Naive thymus-derived CD8-positive, alpha-beta T cell (primary cell): ENCODE measurements at regions of chr14 and their contacts with region 1.

Region 1: GRCh38 chr14:38079268-38079667 is 128.4 kb upstream of the SSTR1 start:
- DNase-seq: no peak
- ATAC-seq: no peak
- H3K4me3 Mint-ChIP-seq: peak overlapping the region in 8 of 10 donors; percentile 31 to 84 (median 64)
- H3K27ac Mint-ChIP-seq: peak overlapping the region; percentile 90 to 97 (median 94)
- H3K4me1 Mint-ChIP-seq: peaks cover 38 to 68% (median 58%) of the 10 kb centered on the region in 4 donors
- H3K27me3 Mint-ChIP-seq: no peaks in the 10 kb centered on the region

Region 2: DNA sequence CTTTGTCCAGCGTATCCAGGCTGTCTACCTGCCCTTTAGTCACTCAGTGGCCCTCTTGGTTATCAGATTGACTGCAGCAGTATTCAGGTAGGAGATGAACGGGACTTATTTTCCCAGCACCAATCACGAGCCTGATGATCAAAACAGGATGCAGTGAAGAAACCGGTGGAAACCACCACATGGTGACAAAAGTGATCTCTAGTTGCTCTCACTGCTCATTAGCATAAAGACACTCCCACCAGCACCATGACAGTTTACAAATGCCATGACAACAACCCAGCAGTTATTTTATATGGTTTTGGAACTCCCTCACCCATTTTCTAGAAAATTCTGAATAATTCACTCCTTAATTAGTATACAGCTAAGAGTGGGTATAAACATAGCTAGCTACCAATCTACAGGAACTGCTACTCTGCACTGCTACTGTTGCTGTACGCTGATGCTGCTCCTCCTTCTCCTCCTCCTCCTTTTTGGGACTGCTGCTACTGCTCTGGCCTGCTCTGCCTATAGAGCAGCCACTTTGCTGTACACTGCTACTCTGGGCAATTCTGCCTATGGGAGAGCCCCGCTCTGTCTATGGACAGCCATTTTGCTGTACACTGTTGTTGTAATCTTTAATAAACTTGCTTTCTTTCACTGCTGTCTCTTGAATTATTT is 14.0 kb before region 1 on chr14:
- POLR2A ChIA-PET with region 1: interaction called, 45 read pairs
- DNase-seq: peak; percentile 14 to 87 (median 76)
- ATAC-seq: peak; percentile 93 to 95
- H3K4me3 Mint-ChIP-seq: peak overlapping the region; percentile 61 to 84 (median 77)
- H3K27ac Mint-ChIP-seq: peak overlapping the region; percentile 92 to 99 (median 98)
- H3K4me1 Mint-ChIP-seq: peaks cover 18 to 44% (median 41%) of the 10 kb centered on the region in 4 donors
- H3K27me3 Mint-ChIP-seq: no peaks in the 10 kb centered on the region

Region 3: GRCh38 chr14:38103542-38104225 is 24.4 kb after region 1 on chr14:
- POLR2A ChIA-PET with region 1: no interaction called
- DNase-seq: no peak
- ATAC-seq: peak; percentile 57 to 61
- H3K4me3 Mint-ChIP-seq: peak overlapping the region in 6 of 10 donors; percentile 49 to 85 (median 66)
- H3K27ac Mint-ChIP-seq: peak overlapping the region in 6 of 10 donors; percentile 15 to 82 (median 65)
- H3K4me1 Mint-ChIP-seq: peaks cover 4 to 20% (median 14%) of the 10 kb centered on the region in 4 donors
- H3K27me3 Mint-ChIP-seq: no peaks in the 10 kb centered on the region

Region 4: GRCh38 chr14:38316922-38317321 is 237.7 kb after region 1 on chr14:
- POLR2A ChIA-PET with region 1: no interaction called
- DNase-seq: no peak
- ATAC-seq: no peak
- H3K4me3 Mint-ChIP-seq: no peak overlapping the region
- H3K27ac Mint-ChIP-seq: no peak overlapping the region
- H3K4me1 Mint-ChIP-seq: no peaks in the 10 kb centered on the region
- H3K27me3 Mint-ChIP-seq: peaks cover 2 to 17% (median 8%) of the 10 kb centered on the region in 5 donors